Right cardiac atrium (tissue), 5 donors: ENCODE measurements at regions of chr7 and their contacts with region 1.

Region 1: DNA sequence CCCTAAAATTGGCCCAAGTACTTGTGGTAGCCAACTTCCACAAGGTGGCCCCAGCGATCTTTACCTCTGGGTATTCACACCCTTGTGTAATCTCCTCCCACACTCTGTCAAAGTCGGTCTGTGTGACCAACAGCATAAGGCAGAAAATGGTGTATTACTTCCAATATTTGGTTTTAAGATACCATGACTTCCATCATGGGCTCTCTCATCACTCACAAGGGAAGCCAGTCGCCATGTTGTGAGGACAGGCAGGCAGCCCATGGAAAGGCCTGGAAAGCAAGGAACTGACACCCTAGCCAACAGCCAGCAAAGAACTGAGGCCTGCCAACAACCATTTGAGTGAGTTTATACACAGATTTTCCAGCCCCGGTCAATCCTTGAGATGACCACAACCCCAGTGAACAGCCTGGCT is 91.0 kb upstream of the KMT2E start:
- DNase-seq: peak; percentile 73 to 85 (median 78)
- ATAC-seq: peak; percentile 89 to 92
- H3K4me3 ChIP-seq: no peak overlapping the region
- H3K27ac ChIP-seq: peak overlapping the region; percentile 26
- H3K4me1 ChIP-seq: peaks cover 2% of the 10 kb centered on the region
- H3K27me3 ChIP-seq: no peaks in the 10 kb centered on the region

Region 2: GRCh38 chr7:104883718-104884452 is 39.1 kb before region 1 on chr7:
- intact Hi-C with region 1: loop called in 3 of 4 experiments (anchors 5 kb)
- DNase-seq: peak; percentile 89 to 96 (median 94)
- ATAC-seq: peak; percentile 97
- H3K4me3 ChIP-seq: no peak overlapping the region
- H3K27ac ChIP-seq: peak overlapping the region; percentile 88
- H3K4me1 ChIP-seq: no peaks in the 10 kb centered on the region
- H3K27me3 ChIP-seq: no peaks in the 10 kb centered on the region